ENCODE measurements at regions of chr12 and their contacts with region 1.

Region 1: DNA sequence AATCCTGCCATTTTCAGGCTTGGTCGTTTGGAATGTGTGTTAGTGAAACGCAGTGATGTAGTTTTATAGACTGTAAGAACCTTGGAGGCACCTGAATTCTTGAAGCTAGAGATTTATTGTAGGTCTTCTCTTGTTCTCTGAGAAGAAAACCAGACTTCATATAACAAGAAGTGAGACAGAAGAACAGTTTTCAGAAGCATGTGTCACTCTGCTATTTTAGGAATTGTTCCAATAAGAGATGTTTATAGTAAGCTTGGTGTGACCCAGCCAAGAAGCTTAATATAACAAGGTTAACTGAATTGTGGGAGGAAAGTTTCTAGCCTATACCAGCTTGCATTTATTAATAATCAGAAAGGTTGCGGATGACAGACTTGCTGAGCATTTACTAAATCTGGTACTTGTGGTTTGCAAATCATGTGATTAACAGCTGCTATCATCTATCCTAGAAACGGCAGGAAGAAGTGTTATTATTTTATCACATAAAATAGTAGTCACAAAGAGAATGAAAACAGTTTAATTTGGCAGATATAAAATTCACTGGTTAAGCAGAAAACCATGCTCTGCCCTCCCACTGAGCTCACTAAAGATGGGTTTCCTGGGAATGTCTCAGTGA is 49.2 kb upstream of the BCAT1 start:
- DNase-seq: peak; percentile 92
- ATAC-seq: peak; percentile 72
- H3K4me3 ChIP-seq: peak overlapping the region; percentile 65
- H3K27ac ChIP-seq: peak overlapping the region; percentile 84
- H3K4me1 ChIP-seq: peaks cover 62% of the 10 kb centered on the region
- H3K27me3 ChIP-seq: no peaks in the 10 kb centered on the region
- CTCF ChIP-seq: no peak
- EP300 ChIP-seq: peak; percentile 84 to 99
- POLR2A ChIP-seq: no peak
- RAD21 ChIP-seq: no peak

Region 2: GRCh38 chr12:24252602-24253001 is 745.5 kb before region 1 on chr12:
- CTCF ChIA-PET with region 1: no interaction called
- POLR2A ChIA-PET with region 1: no interaction called
- RAD21 ChIA-PET with region 1: no interaction called
- SMC1A ChIA-PET with region 1: no interaction called
- in situ Hi-C with region 1: no loop called
- intact Hi-C with region 1: no loop called
- DNase-seq: no peak
- ATAC-seq: no peak
- H3K4me3 ChIP-seq: no peak overlapping the region
- H3K27ac ChIP-seq: no peak overlapping the region
- H3K4me1 ChIP-seq: no peaks in the 10 kb centered on the region
- H3K27me3 ChIP-seq: no peaks in the 10 kb centered on the region
- CTCF ChIP-seq: no peak
- EP300 ChIP-seq: no peak
- POLR2A ChIP-seq: no peak
- RAD21 ChIP-seq: no peak

Region 3: GRCh38 chr12:24625103-24625502 is 373.0 kb before region 1 on chr12:
- CTCF ChIA-PET with region 1: no interaction called
- POLR2A ChIA-PET with region 1: no interaction called
- RAD21 ChIA-PET with region 1: no interaction called
- SMC1A ChIA-PET with region 1: no interaction called
- in situ Hi-C with region 1: no loop called
- intact Hi-C with region 1: no loop called
- DNase-seq: no peak
- ATAC-seq: no peak
- H3K4me3 ChIP-seq: no peak overlapping the region
- H3K27ac ChIP-seq: no peak overlapping the region
- H3K4me1 ChIP-seq: no peaks in the 10 kb centered on the region
- H3K27me3 ChIP-seq: no peaks in the 10 kb centered on the region
- CTCF ChIP-seq: no peak
- EP300 ChIP-seq: no peak
- POLR2A ChIP-seq: no peak
- RAD21 ChIP-seq: no peak

Region 4: GRCh38 chr12:24767016-24767415 is 231.1 kb before region 1 on chr12:
- CTCF ChIA-PET with region 1: no interaction called
- POLR2A ChIA-PET with region 1: no interaction called
- RAD21 ChIA-PET with region 1: no interaction called
- SMC1A ChIA-PET with region 1: no interaction called
- in situ Hi-C with region 1: no loop called
- intact Hi-C with region 1: no loop called
- DNase-seq: no peak
- ATAC-seq: no peak
- H3K4me3 ChIP-seq: no peak overlapping the region
- H3K27ac ChIP-seq: no peak overlapping the region
- H3K4me1 ChIP-seq: no peaks in the 10 kb centered on the region
- H3K27me3 ChIP-seq: no peaks in the 10 kb centered on the region; a peak in 2 of 4 replicates
- CTCF ChIP-seq: no peak
- EP300 ChIP-seq: no peak
- POLR2A ChIP-seq: no peak
- RAD21 ChIP-seq: no peak

Region 5: DNA sequence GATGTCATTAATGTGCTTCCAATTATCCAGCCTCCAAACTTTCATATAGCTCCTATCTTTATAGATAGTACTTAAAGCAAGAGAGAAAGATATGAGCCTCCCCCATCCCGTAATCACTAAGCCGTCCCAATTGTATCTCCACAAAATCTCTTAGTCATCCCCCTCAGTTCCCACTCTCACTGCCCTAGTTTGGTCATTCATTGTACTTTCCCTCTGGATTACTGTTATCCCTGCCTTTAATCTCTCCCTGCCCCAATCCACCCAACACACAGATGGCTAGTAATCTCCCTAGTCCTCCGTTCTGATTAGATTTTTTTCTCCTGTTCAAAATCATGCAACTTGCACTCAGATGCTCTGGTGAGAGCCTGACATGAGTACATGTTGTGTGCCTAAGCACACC is 43.8 kb before region 1 on chr12:
- CTCF ChIA-PET with region 1: interaction called, 3 read pairs
- POLR2A ChIA-PET with region 1: interaction called, 13 read pairs
- RAD21 ChIA-PET with region 1: interaction called, 60 read pairs
- SMC1A ChIA-PET with region 1: interaction called, 69 read pairs
- in situ Hi-C with region 1: no loop called
- intact Hi-C with region 1: loop called (anchors 2 kb)
- DNase-seq: no peak
- ATAC-seq: no peak
- H3K4me3 ChIP-seq: no peak overlapping the region
- H3K27ac ChIP-seq: peak overlapping the region; percentile 64
- H3K4me1 ChIP-seq: peaks cover 49% of the 10 kb centered on the region
- H3K27me3 ChIP-seq: no peaks in the 10 kb centered on the region
- CTCF ChIP-seq: no peak
- EP300 ChIP-seq: no peak
- POLR2A ChIP-seq: no peak
- RAD21 ChIP-seq: no peak

Region 6: DNA sequence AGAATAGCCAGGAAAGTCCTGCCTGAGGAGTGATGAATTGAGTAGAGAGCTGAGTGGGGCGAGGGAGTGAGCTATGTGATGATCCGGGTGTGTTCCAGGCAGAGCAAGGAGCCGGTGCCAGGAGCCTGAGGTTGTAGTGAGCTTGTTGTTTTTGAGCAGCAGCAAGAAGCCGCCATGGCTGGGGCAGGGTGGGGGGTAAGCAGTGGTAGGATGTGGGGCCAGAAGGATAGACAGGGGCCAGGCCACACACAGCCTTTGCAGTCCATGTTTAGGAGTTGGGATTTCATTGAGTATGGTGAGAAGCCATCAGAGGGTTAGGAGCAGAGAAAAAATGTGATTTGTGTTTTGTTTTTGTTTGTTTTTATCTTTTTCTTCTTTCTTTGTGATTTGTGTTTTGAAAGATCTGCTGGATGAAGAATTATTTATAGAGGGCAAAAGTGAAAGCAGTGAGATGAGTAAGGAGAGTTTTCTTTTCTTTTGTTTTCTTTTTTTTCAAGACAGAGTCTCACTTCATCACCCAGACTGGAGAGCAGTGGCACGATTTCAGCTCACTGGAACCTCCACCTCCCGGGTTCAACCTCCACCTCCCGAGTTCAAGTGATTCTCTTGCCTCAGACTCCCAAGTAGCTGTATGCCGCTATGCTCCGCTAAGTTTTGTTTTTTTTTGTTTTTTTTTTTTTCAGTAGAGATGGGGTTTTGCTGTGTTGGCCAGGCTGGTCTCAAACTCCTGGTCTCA is 43.1 kb after region 1 on chr12:
- CTCF ChIA-PET with region 1: interaction called, 4 read pairs
- POLR2A ChIA-PET with region 1: no interaction called
- RAD21 ChIA-PET with region 1: interaction called, 21 read pairs
- SMC1A ChIA-PET with region 1: interaction called, 7 read pairs
- in situ Hi-C with region 1: no loop called
- intact Hi-C with region 1: no loop called
- DNase-seq: no peak
- ATAC-seq: peak; percentile 90
- H3K4me3 ChIP-seq: 0 out of 2 replicates have a peak overlapping the region, but pooled peaks have one; percentile 26
- H3K27ac ChIP-seq: peak overlapping the region; percentile 44; the same call in 1 of the 2 replicates
- H3K4me1 ChIP-seq: peaks cover 12% of the 10 kb centered on the region
- H3K27me3 ChIP-seq: no peaks in the 10 kb centered on the region
- CTCF ChIP-seq: no peak
- EP300 ChIP-seq: no peak
- POLR2A ChIP-seq: no peak
- RAD21 ChIP-seq: no peak

Region 7: GRCh38 chr12:25074954-25075353 is 76.9 kb after region 1 on chr12:
- CTCF ChIA-PET with region 1: no interaction called
- POLR2A ChIA-PET with region 1: interaction called, 3 read pairs
- RAD21 ChIA-PET with region 1: interaction called, 4 read pairs
- SMC1A ChIA-PET with region 1: interaction called, 14 read pairs
- in situ Hi-C with region 1: no loop called
- intact Hi-C with region 1: no loop called
- DNase-seq: no peak
- ATAC-seq: peak; percentile 62
- H3K4me3 ChIP-seq: peak overlapping the region; percentile 15; the same call in 1 of the 2 replicates
- H3K27ac ChIP-seq: no peak overlapping the region
- H3K4me1 ChIP-seq: peaks cover 33% of the 10 kb centered on the region
- H3K27me3 ChIP-seq: no peaks in the 10 kb centered on the region
- CTCF ChIP-seq: no peak
- EP300 ChIP-seq: peak; percentile 19 to 39; a peak in 2 of 4 replicates
- POLR2A ChIP-seq: no peak
- RAD21 ChIP-seq: no peak

Region 8: DNA sequence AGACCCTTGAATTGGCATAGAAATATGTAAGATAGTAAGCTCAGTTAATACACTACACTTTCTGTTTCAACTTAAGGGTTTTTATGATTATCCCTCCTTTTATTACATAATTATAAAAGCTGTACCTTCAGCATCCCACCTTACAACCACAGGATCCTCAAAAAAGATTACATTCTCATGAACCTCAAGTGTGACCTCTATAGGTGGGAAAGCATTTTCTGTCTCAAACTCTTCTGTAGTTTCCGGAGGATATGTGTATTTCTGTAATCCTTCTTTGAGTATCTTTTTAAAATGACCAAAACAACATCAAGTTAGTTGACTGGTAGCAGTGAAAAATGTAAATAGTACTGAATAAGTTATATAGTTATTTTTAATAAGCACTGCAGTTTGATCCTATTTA is 120.9 kb after region 1 on chr12:
- CTCF ChIA-PET with region 1: interaction called, 161 read pairs
- POLR2A ChIA-PET with region 1: no interaction called
- RAD21 ChIA-PET with region 1: interaction called, 34 read pairs
- SMC1A ChIA-PET with region 1: interaction called, 31 read pairs
- in situ Hi-C with region 1: loop called (anchors 5 kb)
- intact Hi-C with region 1: no loop called
- DNase-seq: no peak
- ATAC-seq: peak; percentile 60
- H3K4me3 ChIP-seq: no peak overlapping the region
- H3K27ac ChIP-seq: no peak overlapping the region
- H3K4me1 ChIP-seq: no peaks in the 10 kb centered on the region
- H3K27me3 ChIP-seq: no peaks in the 10 kb centered on the region
- CTCF ChIP-seq: peak; percentile 25 to 46 (median 25); a peak in 4 of 6 replicates
- EP300 ChIP-seq: no peak
- POLR2A ChIP-seq: no peak
- RAD21 ChIP-seq: peak; percentile 54

Region 9: DNA sequence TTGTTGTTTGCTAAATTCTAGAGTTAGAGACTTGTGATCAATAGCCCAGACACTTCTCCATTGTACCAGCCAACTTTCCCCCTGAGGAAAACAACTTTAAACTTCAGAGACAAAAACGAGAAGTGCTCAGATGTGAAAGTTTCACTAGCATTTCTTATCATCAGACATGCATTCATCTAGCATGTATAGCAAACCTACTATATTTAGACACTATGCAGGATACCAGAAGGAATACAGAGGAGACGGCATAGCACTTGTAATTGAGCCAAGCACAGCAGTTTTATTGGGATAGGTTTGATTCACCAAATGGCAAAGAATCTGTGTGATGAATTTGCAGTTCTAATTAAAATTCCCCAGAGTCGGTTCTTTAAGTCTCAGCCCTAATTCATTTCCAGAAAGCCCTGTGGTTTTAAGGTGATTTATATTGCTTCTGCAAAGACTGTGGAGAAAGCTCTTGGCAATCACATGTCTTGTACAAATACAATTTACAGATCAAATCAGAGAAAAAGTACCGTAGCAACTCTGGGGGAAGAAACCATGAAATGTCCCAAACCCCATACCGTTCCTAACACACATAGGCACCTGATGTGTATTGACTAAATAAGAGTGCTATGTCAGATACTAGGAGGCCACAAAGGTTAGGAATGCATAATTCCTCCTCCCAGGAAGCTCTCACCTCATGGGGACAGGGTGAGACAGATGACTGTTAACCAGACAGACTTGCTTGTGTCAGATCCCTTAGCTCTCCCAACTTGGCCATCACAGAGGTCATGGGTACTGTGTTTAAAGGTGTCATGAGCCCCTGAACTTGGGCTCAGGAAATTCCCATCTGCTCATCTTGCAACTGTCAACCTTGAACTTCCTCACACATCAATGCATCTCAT is 322.3 kb after region 1 on chr12:
- CTCF ChIA-PET with region 1: no interaction called
- POLR2A ChIA-PET with region 1: interaction called, 3 read pairs
- RAD21 ChIA-PET with region 1: interaction called, 3 read pairs
- SMC1A ChIA-PET with region 1: interaction called, 3 read pairs
- in situ Hi-C with region 1: no loop called
- intact Hi-C with region 1: loop called (anchors 5 kb)
- DNase-seq: peak; percentile 82
- ATAC-seq: peak; percentile 84
- H3K4me3 ChIP-seq: no peak overlapping the region; the same call in 1 of the 2 replicates
- H3K27ac ChIP-seq: peak overlapping the region; percentile 54
- H3K4me1 ChIP-seq: peaks cover 40% of the 10 kb centered on the region
- H3K27me3 ChIP-seq: no peaks in the 10 kb centered on the region
- CTCF ChIP-seq: no peak
- EP300 ChIP-seq: peak; percentile 28 to 85
- POLR2A ChIP-seq: no peak
- RAD21 ChIP-seq: no peak

Measured in GM12878 (cell line).